Caco-2 (cell line): ENCODE measurements at regions of chr4 and their contacts with region 1.

Region 1: GRCh38 chr4:53015681-53016080 is 153.6 kb downstream of the RASL11B start:
- DNase-seq: peak in 1 of 2 experiments; percentile 44
- H3K4me3 ChIP-seq: no peak overlapping the region
- H3K4me3 Mint-ChIP-seq: no peak overlapping the region
- H3K27ac Mint-ChIP-seq: no peak overlapping the region
- H3K4me1 ChIP-seq: peaks cover 38% of the 10 kb centered on the region
- H3K4me1 Mint-ChIP-seq: peaks cover 13% of the 10 kb centered on the region
- H3K27me3 ChIP-seq: no peaks in the 10 kb centered on the region
- H3K27me3 Mint-ChIP-seq: no peaks in the 10 kb centered on the region
- CTCF ChIP-seq: peak; percentile 70 to 74

Region 2: DNA sequence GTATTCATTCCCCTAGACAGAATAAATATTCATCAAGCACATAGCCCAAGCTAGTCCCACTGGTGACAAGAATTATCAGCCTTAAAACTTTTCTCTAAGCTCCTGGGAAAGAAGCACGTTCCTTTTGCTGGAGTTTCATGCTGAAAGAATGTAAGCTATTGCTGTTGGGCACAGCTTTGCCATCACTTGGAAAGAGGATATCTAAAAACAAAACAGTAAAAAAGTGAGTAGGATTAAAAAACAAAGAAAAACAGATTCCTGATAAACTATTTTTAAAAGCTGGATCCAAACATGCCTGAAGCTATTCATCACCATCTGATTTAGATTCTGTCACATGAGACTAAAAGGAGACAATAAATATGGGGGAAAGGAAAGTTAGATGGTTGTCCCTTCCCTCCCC is 173.3 kb after region 1 on chr4:
- CTCF ChIA-PET with region 1: interaction called, 4 read pairs
- POLR2A ChIA-PET with region 1: interaction called, 10 read pairs
- intact Hi-C with region 1: loop called (anchors 1 kb)
- DNase-seq: no peak
- H3K4me3 ChIP-seq: no peak overlapping the region
- H3K4me3 Mint-ChIP-seq: no peak overlapping the region
- H3K27ac Mint-ChIP-seq: no peak overlapping the region
- H3K4me1 ChIP-seq: peaks cover 30% of the 10 kb centered on the region
- H3K4me1 Mint-ChIP-seq: peaks cover 20% of the 10 kb centered on the region
- H3K27me3 ChIP-seq: no peaks in the 10 kb centered on the region
- H3K27me3 Mint-ChIP-seq: no peaks in the 10 kb centered on the region
- CTCF ChIP-seq: no peak

Region 3: GRCh38 chr4:53377319-53378170 is 361.9 kb after region 1 on chr4 and contains the start of gene FIP1L1:
- CTCF ChIA-PET with region 1: no interaction called
- POLR2A ChIA-PET with region 1: no interaction called
- intact Hi-C with region 1: loop called (anchors 5 kb)
- DNase-seq: peak; percentile 93 to 96
- H3K4me3 ChIP-seq: peak within 1 kb of the TSS; percentile 78
- H3K4me3 Mint-ChIP-seq: peak within 1 kb of the TSS; percentile 98
- H3K27ac Mint-ChIP-seq: peak within 1 kb of the TSS; percentile 98
- H3K4me1 ChIP-seq: peaks cover 14% of the 10 kb centered on the region; the same call in 1 of the 2 replicates
- H3K4me1 Mint-ChIP-seq: peaks cover 16% of the 10 kb centered on the region
- H3K27me3 ChIP-seq: no peaks in the 10 kb centered on the region
- H3K27me3 Mint-ChIP-seq: no peaks in the 10 kb centered on the region
- CTCF ChIP-seq: no peak
- total RNA-seq, gene FIP1L1: 62.5 and 69.4 TPM in 2 replicates

Region 4: DNA sequence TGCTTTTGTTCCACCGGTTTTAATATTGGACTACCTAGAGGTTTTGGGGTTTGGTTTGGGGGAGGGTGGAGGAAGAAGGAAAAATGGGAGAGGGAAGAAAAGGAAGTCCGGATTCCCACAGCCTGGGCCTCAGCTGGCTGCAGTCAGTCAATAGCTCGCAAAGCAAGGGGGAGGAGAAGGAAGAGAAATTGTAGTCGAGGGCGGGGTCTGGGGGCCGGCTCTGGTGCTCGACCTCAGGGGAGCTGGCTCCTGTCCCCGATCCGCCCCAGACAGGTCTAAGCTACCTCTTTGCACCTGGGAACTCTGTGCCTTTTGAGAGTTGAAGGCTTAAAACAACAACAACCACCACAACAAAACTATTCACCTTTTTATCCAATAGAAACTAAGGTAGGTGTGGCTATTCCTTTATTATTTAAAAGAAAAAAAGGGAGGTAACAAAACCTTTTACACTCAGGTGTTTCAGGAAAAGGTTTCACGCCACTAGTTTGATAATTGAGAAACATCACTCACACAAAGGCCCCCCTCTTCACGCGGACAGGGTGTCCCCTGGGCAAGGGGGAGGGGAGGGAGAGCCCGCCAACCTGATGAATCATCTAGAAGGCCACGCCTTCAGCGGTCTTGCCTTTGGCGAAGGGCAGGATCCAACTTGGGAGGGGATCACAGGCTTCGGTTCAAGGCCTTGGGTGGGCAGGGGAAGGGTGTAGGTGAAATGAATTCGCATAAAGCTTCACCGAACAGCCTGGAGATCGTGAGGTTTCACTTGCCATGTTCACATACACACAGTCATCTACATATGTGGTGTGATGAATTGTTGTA is 577.2 kb after region 1 on chr4:
- CTCF ChIA-PET with region 1: no interaction called
- POLR2A ChIA-PET with region 1: interaction called, 7 read pairs
- intact Hi-C with region 1: loop called (anchors 5 kb)
- DNase-seq: peak; percentile 73 to 82
- H3K4me3 ChIP-seq: peak overlapping the region; percentile 35
- H3K4me3 Mint-ChIP-seq: peak overlapping the region; percentile 82
- H3K27ac Mint-ChIP-seq: peak overlapping the region; percentile 87
- H3K4me1 ChIP-seq: peaks cover 33% of the 10 kb centered on the region
- H3K4me1 Mint-ChIP-seq: peaks cover 32% of the 10 kb centered on the region
- H3K27me3 ChIP-seq: no peaks in the 10 kb centered on the region
- H3K27me3 Mint-ChIP-seq: no peaks in the 10 kb centered on the region
- CTCF ChIP-seq: no peak

Region 5: GRCh38 chr4:53777244-53777984 is 761.7 kb after region 1 on chr4:
- CTCF ChIA-PET with region 1: no interaction called
- POLR2A ChIA-PET with region 1: no interaction called
- intact Hi-C with region 1: loop called (anchors 5 kb)
- DNase-seq: no peak
- H3K4me3 ChIP-seq: no peak overlapping the region
- H3K4me3 Mint-ChIP-seq: peak overlapping the region; percentile 50
- H3K27ac Mint-ChIP-seq: no peak overlapping the region
- H3K4me1 ChIP-seq: peaks cover 48% of the 10 kb centered on the region
- H3K4me1 Mint-ChIP-seq: peaks cover 27% of the 10 kb centered on the region
- H3K27me3 ChIP-seq: no peaks in the 10 kb centered on the region
- H3K27me3 Mint-ChIP-seq: no peaks in the 10 kb centered on the region
- CTCF ChIP-seq: no peak